Ascending aorta (tissue), 2 donors: ENCODE measurements at regions of chr14 and their contacts with region 1.

Region 1: GRCh38 chr14:31207755-31208545 is at the start of gene HECTD1:
- DNase-seq: peak; percentile 15 to 93
- H3K4me3 ChIP-seq: peak within 1 kb of the TSS; percentile 82 to 98
- H3K27ac ChIP-seq: peak within 1 kb of the TSS; percentile 98 to 100
- H3K4me1 ChIP-seq: peaks cover 7 to 22% of the 10 kb centered on the region in 2 donors
- H3K27me3 ChIP-seq: no peaks in the 10 kb centered on the region
- CTCF ChIP-seq: peak; percentile 22 to 89 (median 37)
- total RNA-seq, gene HECTD1: 63.6 TPM

Region 2: GRCh38 chr14:30180219-30180618 is 1027.7 kb before region 1 on chr14:
- intact Hi-C with region 1: no loop called
- DNase-seq: no peak
- H3K4me3 ChIP-seq: no peak overlapping the region
- H3K27ac ChIP-seq: no peak overlapping the region
- H3K4me1 ChIP-seq: peaks cover 0 to under 1% of the 10 kb centered on the region in 2 donors
- H3K27me3 ChIP-seq: no peaks in the 10 kb centered on the region
- CTCF ChIP-seq: no peak

Region 3: GRCh38 chr14:31000629-31001338 is 207.2 kb before region 1 on chr14:
- intact Hi-C with region 1: no loop called
- DNase-seq: no peak
- H3K4me3 ChIP-seq: no peak overlapping the region
- H3K27ac ChIP-seq: no peak overlapping the region
- H3K4me1 ChIP-seq: peaks cover 0 to 5% of the 10 kb centered on the region in 2 donors
- H3K27me3 ChIP-seq: no peaks in the 10 kb centered on the region
- CTCF ChIP-seq: no peak

Region 4: GRCh38 chr14:31026395-31027118 is 181.4 kb before region 1 on chr14:
- intact Hi-C with region 1: loop called (anchors 2 kb)
- DNase-seq: peak; percentile 89 to 98
- H3K4me3 ChIP-seq: peak overlapping the region; percentile 98 to 100
- H3K27ac ChIP-seq: peak overlapping the region; percentile 100
- H3K4me1 ChIP-seq: peaks cover 0 to 14% of the 10 kb centered on the region in 2 donors
- H3K27me3 ChIP-seq: no peaks in the 10 kb centered on the region
- CTCF ChIP-seq: no peak

Region 5: DNA sequence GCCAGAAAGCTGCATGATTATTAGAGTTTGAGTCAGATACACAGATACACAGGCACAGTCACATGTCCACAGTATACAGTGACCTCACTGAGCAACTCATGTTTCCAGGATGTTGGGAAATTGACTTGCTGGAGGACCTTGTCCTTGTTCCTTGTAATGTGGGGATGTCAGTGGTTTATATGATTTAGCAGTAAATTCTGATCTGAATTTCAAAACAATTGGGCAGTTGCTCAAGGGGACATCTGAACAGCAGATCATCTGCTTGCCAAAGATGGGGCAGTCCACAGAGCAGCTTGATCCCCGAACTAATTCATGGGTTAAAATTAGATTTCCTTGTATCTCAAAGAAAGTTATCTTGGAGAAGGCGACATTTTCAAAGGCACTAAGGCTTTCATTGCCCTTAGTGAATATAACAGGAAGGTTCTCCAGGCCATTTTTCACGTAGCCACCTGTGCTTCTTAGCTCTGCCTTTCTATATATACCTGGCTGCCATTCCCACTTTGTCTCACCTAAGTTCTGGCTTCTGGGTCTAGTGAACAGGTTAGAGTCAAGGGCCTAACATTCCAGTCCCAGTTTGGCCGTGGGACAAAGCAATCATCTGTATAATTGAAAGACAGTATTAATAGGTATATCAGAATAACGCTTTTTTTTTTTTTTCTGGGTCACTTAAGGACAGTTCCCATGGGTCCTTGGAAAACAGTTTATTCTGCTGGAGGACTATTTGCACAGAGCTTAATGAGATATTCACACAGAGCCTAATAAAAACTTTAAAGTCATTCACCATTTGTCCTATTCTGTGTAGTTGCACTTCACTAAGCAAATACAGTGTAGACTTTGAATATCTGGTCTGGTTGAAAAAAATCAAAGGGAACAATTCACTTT is 116.8 kb before region 1 on chr14:
- intact Hi-C with region 1: no loop called
- DNase-seq: peak; percentile 27 to 85
- H3K4me3 ChIP-seq: no peak overlapping the region
- H3K27ac ChIP-seq: peak overlapping the region; percentile 74 to 78
- H3K4me1 ChIP-seq: peaks cover 0 to 6% of the 10 kb centered on the region in 2 donors
- H3K27me3 ChIP-seq: no peaks in the 10 kb centered on the region
- CTCF ChIP-seq: no peak

Region 6: DNA sequence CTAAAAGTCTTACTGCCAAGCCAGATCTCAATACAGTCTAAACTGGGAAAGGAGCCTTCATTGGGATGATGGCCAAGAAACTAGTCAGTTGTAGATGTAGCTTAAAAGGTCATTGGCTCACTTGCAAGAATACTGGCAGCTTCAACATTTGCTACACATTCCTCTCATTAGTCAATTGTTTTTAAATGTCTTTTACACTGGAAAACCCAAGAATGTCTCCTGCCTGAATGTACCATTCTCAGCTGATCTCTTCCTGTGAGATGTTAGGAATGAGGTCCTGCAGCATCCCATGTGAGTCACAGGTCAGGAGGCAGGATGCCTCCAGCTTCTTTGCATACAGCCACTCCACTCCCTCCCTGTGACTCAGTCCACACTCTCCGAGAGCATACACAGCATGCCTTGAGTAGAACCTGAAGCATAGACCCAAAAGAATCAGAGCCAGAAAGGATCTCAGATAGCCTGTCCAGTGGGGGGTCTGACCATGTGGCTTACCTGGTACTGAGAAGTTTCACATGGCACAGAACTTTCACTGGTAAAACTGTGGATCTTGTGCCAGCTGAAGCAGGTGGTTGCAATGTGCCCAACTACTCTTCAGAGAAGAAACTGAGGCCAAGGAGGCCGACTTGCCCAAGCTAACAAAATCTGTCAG is 55.7 kb after region 1 on chr14:
- intact Hi-C with region 1: loop called (anchors 1 kb)
- DNase-seq: peak; percentile 22 to 89
- H3K4me3 ChIP-seq: no peak overlapping the region
- H3K27ac ChIP-seq: peak overlapping the region; percentile 69 to 73
- H3K4me1 ChIP-seq: peaks cover 4 to 31% of the 10 kb centered on the region in 2 donors
- H3K27me3 ChIP-seq: no peaks in the 10 kb centered on the region
- CTCF ChIP-seq: no peak

Region 7: GRCh38 chr14:31320216-31320615 is 112.3 kb after region 1 on chr14:
- intact Hi-C with region 1: loop called (anchors 2 kb)
- DNase-seq: no peak
- H3K4me3 ChIP-seq: no peak overlapping the region
- H3K27ac ChIP-seq: peak overlapping the region; percentile 30 to 59
- H3K4me1 ChIP-seq: peaks cover 0 to 6% of the 10 kb centered on the region in 2 donors
- H3K27me3 ChIP-seq: no peaks in the 10 kb centered on the region
- CTCF ChIP-seq: no peak

Region 8: DNA sequence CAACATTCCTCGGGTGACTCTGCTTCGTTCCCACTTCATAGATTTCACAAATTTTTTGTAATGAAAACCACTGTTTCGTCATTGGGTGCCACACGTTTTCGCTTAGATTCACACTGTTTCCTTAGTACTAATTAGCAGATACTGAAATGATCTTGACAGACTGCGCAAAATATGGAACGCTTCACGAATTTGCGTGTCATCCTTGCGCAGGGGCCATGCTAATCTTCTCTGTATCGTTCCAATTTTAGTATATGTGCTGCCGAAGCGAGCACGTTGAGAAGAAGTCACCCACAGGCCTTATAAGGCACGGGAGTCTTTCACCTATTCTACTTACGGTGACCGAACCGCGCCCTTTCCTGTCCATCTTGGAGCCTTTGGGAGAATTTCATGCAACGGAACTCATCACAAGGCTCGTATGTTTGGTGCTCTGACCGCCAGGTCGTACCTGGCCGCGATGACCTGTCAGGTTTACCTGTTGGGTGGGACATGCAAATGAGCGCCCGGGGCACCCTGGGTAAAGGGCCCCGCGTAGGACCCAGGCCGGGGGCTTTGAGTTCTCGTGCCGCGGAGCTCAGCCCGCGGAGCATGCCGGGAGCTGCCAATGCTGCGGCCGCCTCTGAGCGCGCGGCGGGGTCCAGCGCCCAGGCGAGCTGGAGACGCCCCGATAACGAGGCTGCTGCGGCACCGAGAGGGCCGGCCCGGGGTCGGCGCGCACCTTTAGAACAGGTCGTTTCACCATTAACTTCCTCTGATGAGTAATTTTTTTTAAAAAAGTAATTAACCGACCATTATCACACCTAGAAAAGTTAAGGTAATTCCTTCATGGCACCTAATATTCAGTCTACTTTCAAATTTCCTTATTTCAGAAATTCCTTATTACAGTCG is 995.3 kb after region 1 on chr14 and contains the start of gene RNU6-8:
- intact Hi-C with region 1: loop called (anchors 5 kb)
- DNase-seq: peak; percentile 40 to 91
- H3K4me3 ChIP-seq: peak within 1 kb of the TSS; percentile 72 to 75
- H3K27ac ChIP-seq: peak within 1 kb of the TSS; percentile 69 to 75
- H3K4me1 ChIP-seq: no peaks in the 10 kb centered on the region
- H3K27me3 ChIP-seq: no peaks in the 10 kb centered on the region
- CTCF ChIP-seq: no peak
- total RNA-seq, gene RNU6-8: not detected